Endothelial cell of umbilical vein (primary cell): ENCODE measurements at regions of chr5 and their contacts with region 1.

Region 1: DNA sequence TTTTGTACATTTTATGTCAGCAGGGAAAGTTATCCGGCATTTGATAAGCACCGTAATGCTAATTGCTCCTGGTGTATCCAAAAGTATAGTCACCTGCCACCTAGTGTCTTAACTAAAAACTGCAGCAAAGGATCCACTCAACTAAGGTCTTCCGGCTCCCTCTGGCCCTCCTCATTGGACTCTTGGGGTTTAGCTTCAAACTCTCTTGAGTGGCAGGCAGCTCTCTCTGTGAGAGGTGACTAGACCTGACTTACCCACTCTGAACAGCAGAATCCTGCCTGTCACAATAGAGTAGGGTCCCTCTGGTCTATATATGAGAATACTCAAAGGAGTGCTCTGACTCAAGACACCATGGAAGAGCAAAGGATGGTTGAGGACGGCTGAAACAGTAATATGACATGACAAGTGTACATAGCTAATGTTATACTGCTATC is 60.3 kb upstream of the CAST start:
- DNase-seq: peak; percentile 87
- H3K4me3 ChIP-seq: peak overlapping the region in 1 of 3 experiments; percentile 21
- H3K27ac ChIP-seq: peak overlapping the region; percentile 90
- H3K4me1 ChIP-seq: peaks cover 43% of the 10 kb centered on the region
- H3K27me3 ChIP-seq: no peaks in the 10 kb centered on the region
- CTCF ChIP-seq: peak; percentile 71
- POLR2A ChIP-seq: no peak

Region 2: GRCh38 chr5:96408276-96408777 is 193.5 kb before region 1 on chr5:
- CTCF ChIA-PET with region 1: interaction called, 8 read pairs
- POLR2A ChIA-PET with region 1: no interaction called
- dilution Hi-C with region 1: no loop called
- intact Hi-C with region 1: loop called (anchors 1 kb)
- DNase-seq: peak; percentile 89
- H3K4me3 ChIP-seq: no peak overlapping the region
- H3K27ac ChIP-seq: peak overlapping the region; percentile 84
- H3K4me1 ChIP-seq: peaks cover 33% of the 10 kb centered on the region
- H3K27me3 ChIP-seq: no peaks in the 10 kb centered on the region
- CTCF ChIP-seq: no peak
- POLR2A ChIP-seq: no peak

Region 3: DNA sequence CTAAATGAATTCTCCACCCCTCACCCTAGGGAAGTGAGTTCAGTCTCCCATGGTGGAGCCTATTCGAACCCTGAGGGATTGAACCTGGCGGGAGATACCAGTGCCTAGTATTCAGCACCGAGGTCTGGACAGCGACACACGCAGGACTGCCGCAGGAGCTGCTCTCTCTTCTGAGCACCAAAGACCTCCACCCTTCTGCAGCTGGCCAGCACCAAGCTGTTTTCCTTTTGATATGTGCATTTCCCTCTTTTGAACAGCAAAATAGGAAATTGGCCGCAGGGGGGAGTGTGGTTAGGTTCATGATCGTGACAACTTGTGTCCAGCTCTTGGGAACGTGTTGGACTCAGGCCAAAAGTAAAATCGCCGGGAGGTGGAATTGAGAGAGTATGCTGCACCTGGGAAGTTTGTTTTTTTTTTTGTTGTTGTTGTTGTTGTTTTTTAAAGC is 167.6 kb before region 1 on chr5:
- CTCF ChIA-PET with region 1: interaction called, 14 read pairs
- POLR2A ChIA-PET with region 1: no interaction called
- dilution Hi-C with region 1: no loop called
- intact Hi-C with region 1: loop called (anchors 1 kb)
- DNase-seq: peak; percentile 75
- H3K4me3 ChIP-seq: no peak overlapping the region
- H3K27ac ChIP-seq: no peak overlapping the region
- H3K4me1 ChIP-seq: peaks cover 22% of the 10 kb centered on the region
- H3K27me3 ChIP-seq: peaks cover 27 to 34% of the 10 kb centered on the region in 2 experiments
- CTCF ChIP-seq: peak in 1 of 2 donors; percentile 10
- POLR2A ChIP-seq: no peak

Region 4: DNA sequence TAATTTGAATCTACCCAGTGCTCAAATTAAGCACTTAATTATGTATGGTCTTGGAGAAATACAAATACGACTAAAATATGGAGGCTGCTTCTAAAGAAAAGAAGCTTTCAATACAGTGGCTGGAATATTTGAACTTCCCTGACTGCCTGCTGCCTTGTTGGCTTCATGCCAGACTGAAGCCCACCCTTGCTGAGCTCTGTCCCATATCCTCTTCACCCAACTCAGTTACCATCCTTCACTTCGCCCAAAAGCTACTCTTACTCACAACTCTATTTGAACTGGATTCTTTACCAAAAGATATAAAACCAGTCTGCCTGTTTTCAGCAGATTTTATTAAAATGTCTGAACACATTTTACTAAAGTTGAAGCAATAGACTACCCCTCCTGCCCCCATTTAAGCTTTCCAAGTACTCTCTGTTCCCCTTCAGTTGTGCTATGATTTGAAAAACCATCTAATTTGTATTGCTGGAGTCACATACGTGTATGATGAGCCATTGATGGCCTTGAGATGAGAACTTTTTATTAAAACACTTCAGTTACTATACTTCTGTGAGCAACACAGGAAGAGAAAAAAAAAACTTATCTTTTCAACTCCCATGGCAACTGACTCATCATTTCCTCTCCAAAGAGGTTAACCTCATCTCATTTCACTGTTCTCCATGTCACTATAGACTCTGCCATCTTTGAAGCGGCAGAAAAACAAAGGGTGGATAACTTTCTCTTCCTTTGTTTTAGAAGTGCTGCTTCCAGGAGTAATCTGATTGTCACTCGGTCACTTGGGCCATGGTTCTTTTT is 64.6 kb before region 1 on chr5:
- CTCF ChIA-PET with region 1: no interaction called
- POLR2A ChIA-PET with region 1: no interaction called
- dilution Hi-C with region 1: no loop called
- intact Hi-C with region 1: loop called (anchors 1 kb)
- DNase-seq: peak; percentile 87
- H3K4me3 ChIP-seq: no peak overlapping the region
- H3K27ac ChIP-seq: peak overlapping the region; percentile 100
- H3K4me1 ChIP-seq: peaks cover 37% of the 10 kb centered on the region
- H3K27me3 ChIP-seq: no peaks in the 10 kb centered on the region
- CTCF ChIP-seq: no peak
- POLR2A ChIP-seq: peak; percentile 37

Region 5: GRCh38 chr5:96572864-96573512 is 28.8 kb before region 1 on chr5:
- CTCF ChIA-PET with region 1: interaction called, 16 read pairs
- POLR2A ChIA-PET with region 1: no interaction called
- dilution Hi-C with region 1: no loop called
- intact Hi-C with region 1: loop called (anchors 1 kb)
- DNase-seq: peak; percentile 93
- H3K4me3 ChIP-seq: no peak overlapping the region
- H3K27ac ChIP-seq: peak overlapping the region; percentile 96
- H3K4me1 ChIP-seq: peaks cover 42% of the 10 kb centered on the region
- H3K27me3 ChIP-seq: no peaks in the 10 kb centered on the region
- CTCF ChIP-seq: no peak
- POLR2A ChIP-seq: peak; percentile 74

Region 6: DNA sequence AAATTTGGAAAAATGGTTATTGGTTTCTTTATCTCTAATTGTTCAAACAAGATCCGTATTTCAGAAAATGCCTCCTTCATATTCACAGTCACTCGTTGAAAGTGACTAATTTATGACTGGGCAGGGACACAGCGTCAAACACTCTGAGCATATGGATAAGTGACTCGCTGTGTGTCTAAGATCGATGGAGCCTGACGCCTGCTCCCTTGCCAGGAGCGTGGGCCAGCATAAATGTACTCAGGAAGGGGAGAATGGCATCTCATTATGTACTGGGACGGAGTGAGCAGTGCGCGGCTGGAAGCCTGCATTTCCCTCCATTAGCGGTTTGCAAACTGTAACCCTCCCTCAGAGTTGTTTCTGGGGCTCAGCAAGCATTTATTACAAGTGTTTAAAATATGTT is 19.5 kb before region 1 on chr5:
- CTCF ChIA-PET with region 1: interaction called, 38 read pairs
- POLR2A ChIA-PET with region 1: interaction called, 3 read pairs
- dilution Hi-C with region 1: no loop called
- intact Hi-C with region 1: loop called (anchors 1 kb)
- DNase-seq: peak; percentile 64
- H3K4me3 ChIP-seq: no peak overlapping the region
- H3K27ac ChIP-seq: peak overlapping the region; percentile 86
- H3K4me1 ChIP-seq: peaks cover 67% of the 10 kb centered on the region
- H3K27me3 ChIP-seq: no peaks in the 10 kb centered on the region
- CTCF ChIP-seq: no peak
- POLR2A ChIP-seq: no peak